GM10248 (cell line): ENCODE measurements at regions of chr7 and their contacts with region 1.

Region 1: DNA sequence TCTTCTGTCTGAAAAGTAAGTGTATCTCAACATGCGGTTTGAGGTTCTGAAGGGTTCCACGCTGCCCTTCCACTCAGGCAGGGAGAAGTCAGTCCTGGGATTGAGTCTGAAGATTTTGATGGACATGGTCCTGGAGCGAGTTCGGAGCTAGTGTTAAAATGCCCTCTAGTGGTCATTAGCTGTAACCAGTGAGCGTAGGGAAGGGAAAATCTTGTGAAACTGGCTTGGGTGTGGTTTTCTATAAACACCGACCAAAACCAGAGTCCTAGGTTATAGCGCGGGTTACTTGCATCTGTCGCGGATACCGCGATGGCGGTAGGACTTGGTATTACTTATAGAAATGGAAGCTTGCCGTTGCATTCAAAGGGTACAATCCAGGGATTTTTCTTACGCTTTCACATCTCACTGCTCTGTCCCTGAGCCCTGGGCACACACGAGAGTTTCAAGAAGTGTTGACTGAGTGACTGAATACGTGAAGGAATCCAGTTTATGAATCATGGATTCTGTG is 348.2 kb upstream of the C7orf33 start:
- DNase-seq: peak; percentile 44
- CTCF ChIP-seq: peak; percentile 81

Region 2: DNA sequence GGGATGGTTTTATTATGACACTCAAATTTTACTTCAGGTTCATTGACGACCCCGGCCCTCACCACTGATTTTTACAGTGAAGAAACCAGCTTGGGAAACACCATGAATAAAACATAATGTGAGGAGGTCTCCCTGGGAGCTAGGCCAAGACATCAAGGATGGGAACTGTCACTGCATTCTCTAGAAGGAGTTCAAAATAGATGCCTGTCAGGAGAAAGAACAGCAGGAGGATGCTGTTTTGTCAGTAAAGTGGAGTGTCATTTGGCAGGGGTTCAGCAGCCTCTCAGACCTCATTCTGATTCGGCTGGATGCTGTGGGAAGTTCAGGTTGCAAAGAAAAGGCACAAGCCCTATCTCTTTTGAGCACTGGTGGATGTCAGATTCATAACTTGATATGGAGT is 12.1 kb before region 1 on chr7:
- CTCF ChIA-PET with region 1: interaction called, 11 read pairs
- POLR2A ChIA-PET with region 1: no interaction called
- DNase-seq: no peak
- CTCF ChIP-seq: no peak

Region 3: GRCh38 chr7:148255333-148255732 is 13.0 kb after region 1 on chr7:
- CTCF ChIA-PET with region 1: interaction called, 40 read pairs
- POLR2A ChIA-PET with region 1: no interaction called
- DNase-seq: no peak
- CTCF ChIP-seq: no peak

Region 4: DNA sequence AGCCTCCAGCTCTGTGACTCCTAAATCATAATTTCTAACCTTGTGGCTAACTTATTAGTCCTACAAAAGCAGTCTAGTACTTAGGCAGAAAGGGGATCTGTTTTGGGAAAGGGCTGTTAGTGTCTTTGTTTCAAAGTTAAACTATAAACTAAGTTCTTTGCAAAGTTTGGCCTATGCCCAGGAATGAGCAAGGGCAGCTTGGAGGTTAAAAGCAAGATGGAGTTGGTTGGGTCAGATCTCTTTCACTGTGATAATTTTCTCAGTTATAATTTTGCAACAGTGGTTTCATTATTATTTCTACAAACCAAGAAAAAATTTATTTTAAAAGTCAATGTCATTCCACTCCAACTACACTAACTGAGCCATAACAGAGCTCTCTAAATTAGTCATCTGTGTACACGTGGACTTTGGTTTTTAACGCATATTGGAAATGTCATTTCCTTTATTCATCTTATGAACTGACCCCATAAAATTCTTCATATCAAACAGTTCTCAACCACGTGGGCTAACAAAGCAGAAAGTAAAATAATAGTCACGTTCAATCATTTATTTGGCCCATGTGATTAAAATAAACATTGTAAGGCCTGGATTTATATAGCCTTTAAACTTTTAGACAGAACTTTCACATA is 205.0 kb after region 1 on chr7:
- CTCF ChIA-PET with region 1: no interaction called
- POLR2A ChIA-PET with region 1: no interaction called
- DNase-seq: peak; percentile 28
- CTCF ChIP-seq: no peak